PC-9 (cell line): ENCODE measurements at regions of chr2 and their contacts with region 1.

Region 1: DNA sequence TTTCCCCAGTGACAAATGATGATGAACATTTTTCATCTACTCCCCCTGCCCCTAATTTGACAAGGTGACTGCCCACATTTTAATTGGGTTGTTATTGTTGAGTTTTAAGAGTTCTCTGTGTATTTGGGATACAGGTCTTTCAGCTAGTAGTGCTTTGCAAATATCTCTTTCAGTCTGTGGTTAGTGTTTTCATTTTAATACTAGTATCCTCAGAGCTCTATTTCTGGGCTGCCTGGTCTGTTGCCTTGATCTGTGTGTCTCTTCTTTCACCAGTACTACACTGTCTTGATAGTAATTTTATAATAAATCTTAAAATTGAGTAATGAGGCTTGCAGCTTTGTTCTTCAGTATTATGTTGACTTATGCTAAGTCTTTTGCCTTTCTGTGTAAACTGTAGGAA is 19.7 kb downstream of the EIF5B start:
- DNase-seq: no peak
- H3K4me3 ChIP-seq: no peak overlapping the region
- H3K27ac ChIP-seq: no peak overlapping the region
- H3K4me1 ChIP-seq: no peaks in the 10 kb centered on the region
- H3K27me3 ChIP-seq: no peaks in the 10 kb centered on the region
- CTCF ChIP-seq: no peak

Region 2: GRCh38 chr2:97759727-97760403 is 1597.0 kb before region 1 on chr2:
- CTCF ChIA-PET with region 1: no interaction called
- POLR2A ChIA-PET with region 1: interaction called, 11 read pairs
- intact Hi-C with region 1: no loop called
- DNase-seq: no peak
- H3K4me3 ChIP-seq: no peak overlapping the region
- H3K27ac ChIP-seq: no peak overlapping the region
- H3K4me1 ChIP-seq: no peaks in the 10 kb centered on the region
- H3K27me3 ChIP-seq: no peaks in the 10 kb centered on the region
- CTCF ChIP-seq: no peak